Heart left ventricle (tissue), 16 donors: ENCODE measurements at regions of chr19 and their contacts with region 1.

Region 1: DNA sequence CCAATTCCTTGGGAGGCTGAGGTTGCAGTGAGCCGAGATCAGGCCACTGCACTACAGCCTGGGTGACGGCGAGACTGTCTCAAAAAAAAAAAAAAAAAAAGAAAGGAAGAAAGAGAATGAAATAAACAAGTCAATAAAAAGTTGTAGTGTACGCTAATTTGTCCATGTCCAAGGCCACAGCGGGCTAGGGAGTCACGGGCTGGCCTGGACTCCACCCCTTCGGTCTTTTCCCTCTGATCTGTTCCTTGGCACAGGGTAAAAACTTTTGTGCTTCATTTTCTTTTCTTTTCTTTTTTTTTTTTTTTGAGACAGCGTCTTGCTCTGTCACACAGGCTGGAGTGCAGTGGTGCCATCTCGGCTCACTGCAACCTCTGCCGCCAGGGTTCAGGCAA is 19.4 kb upstream of the MKNK2 start:
- DNase-seq: no peak
- ATAC-seq: no peak
- H3K4me3 ChIP-seq: no peak overlapping the region
- H3K27ac ChIP-seq: no peak overlapping the region
- H3K4me1 ChIP-seq: peaks cover 0 to 38% (median 8%) of the 10 kb centered on the region in 12 donors
- H3K27me3 ChIP-seq: no peaks in the 10 kb centered on the region
- CTCF ChIP-seq: no peak
- POLR2A ChIP-seq: no peak

Region 2: GRCh38 chr19:1935484-1936208 is 134.8 kb before region 1 on chr19:
- intact Hi-C with region 1: loop called in 3 of 10 experiments (anchors 5 to 10 kb)
- DNase-seq: peak in 2 of 5 donors; percentile 61 to 69
- ATAC-seq: peak in 1 of 4 donors; percentile 8
- H3K4me3 ChIP-seq: no peak overlapping the region
- H3K27ac ChIP-seq: peak overlapping the region in 3 of 12 donors; percentile 4 to 60 (median 25)
- H3K4me1 ChIP-seq: peaks cover 3 to 22% (median 11%) of the 10 kb centered on the region in 12 donors
- H3K27me3 ChIP-seq: no peaks in the 10 kb centered on the region
- CTCF ChIP-seq: no peak
- POLR2A ChIP-seq: no peak

Region 3: DNA sequence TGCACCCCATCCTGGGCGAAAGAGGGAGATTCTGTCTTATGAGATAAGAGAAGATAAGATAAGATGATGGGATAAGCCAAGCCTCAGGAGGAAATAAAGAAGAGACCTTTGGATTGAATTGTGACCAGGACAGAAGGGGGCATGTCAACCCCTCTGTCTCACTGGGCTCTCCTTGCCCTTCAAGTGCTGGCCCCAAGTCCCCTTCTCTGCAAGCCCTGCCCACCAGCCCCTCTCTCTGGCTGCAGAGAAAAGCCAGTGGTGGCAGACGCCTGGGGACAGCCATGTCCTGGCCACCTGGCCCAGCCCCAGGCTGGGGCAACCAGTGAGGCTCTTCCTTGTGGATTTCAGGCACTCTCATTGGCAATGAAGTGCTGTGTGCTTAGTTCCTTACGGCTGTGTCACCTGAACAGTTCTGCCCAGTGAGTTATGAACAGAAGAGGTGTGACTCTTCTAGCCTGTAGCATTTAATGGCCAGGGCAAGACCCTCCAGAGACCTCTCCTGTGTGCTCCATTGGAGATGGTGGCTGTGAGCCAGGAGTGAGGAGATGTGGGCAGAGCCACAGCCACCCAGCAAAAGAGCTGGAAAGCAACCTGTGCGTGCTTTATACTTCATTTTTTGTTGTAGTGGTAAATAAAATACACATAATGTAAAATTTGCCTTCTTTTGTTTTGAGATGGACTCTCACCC is 48.8 kb before region 1 on chr19:
- intact Hi-C with region 1: loop called (anchors 1 to 2 kb)
- DNase-seq: no peak
- ATAC-seq: no peak
- H3K4me3 ChIP-seq: no peak overlapping the region
- H3K27ac ChIP-seq: no peak overlapping the region
- H3K4me1 ChIP-seq: peaks cover 0 to 11% (median 3%) of the 10 kb centered on the region in 12 donors
- H3K27me3 ChIP-seq: no peaks in the 10 kb centered on the region
- CTCF ChIP-seq: no peak
- POLR2A ChIP-seq: no peak

Region 4: GRCh38 chr19:2135474-2136402 is 65.3 kb after region 1 on chr19:
- intact Hi-C with region 1: no loop called
- DNase-seq: no peak
- ATAC-seq: peak in 1 of 4 donors; percentile 2
- H3K4me3 ChIP-seq: no peak overlapping the region
- H3K27ac ChIP-seq: no peak overlapping the region
- H3K4me1 ChIP-seq: peaks cover 0 to 17% (median 5%) of the 10 kb centered on the region in 12 donors
- H3K27me3 ChIP-seq: no peaks in the 10 kb centered on the region
- CTCF ChIP-seq: no peak
- POLR2A ChIP-seq: no peak

Region 5: GRCh38 chr19:2164020-2164998 is 93.9 kb after region 1 on chr19:
- intact Hi-C with region 1: no loop called
- DNase-seq: peak in 1 of 5 donors; percentile 81
- ATAC-seq: peak in 2 of 4 donors; percentile 7 to 20
- H3K4me3 ChIP-seq: peak overlapping the region; percentile 61 to 99 (median 92)
- H3K27ac ChIP-seq: peak overlapping the region; percentile 78 to 98 (median 94)
- H3K4me1 ChIP-seq: peaks cover 17 to 58% (median 46%) of the 10 kb centered on the region in 12 donors
- H3K27me3 ChIP-seq: no peaks in the 10 kb centered on the region
- CTCF ChIP-seq: no peak
- POLR2A ChIP-seq: no peak

Region 6: GRCh38 chr19:2236314-2237050 is 166.1 kb after region 1 on chr19 and contains the starts of genes PLEKHJ1 and SF3A2:
- intact Hi-C with region 1: no loop called
- DNase-seq: peak; percentile 97 to 99 (median 98)
- ATAC-seq: peak; percentile 91 to 95 (median 94)
- H3K4me3 ChIP-seq: peak within 1 kb of the TSS; percentile 72 to 98 (median 94)
- H3K27ac ChIP-seq: peak within 1 kb of the TSS; percentile 92 to 100 (median 99)
- H3K4me1 ChIP-seq: peaks cover 14 to 75% (median 54%) of the 10 kb centered on the region in 12 donors
- H3K27me3 ChIP-seq: no peaks in the 10 kb centered on the region
- CTCF ChIP-seq: peak; percentile 92 to 100 (median 98)
- POLR2A ChIP-seq: peak in 1 of 2 donors; percentile 52
- total RNA-seq, gene PLEKHJ1: 44.6 to 63.2 (median 46.5) TPM
- total RNA-seq, gene SF3A2: 19.2 to 43.9 (median 28.6) TPM